B cell (primary cell): ENCODE measurements at regions of chr9 and their contacts with region 1.

Region 1: DNA sequence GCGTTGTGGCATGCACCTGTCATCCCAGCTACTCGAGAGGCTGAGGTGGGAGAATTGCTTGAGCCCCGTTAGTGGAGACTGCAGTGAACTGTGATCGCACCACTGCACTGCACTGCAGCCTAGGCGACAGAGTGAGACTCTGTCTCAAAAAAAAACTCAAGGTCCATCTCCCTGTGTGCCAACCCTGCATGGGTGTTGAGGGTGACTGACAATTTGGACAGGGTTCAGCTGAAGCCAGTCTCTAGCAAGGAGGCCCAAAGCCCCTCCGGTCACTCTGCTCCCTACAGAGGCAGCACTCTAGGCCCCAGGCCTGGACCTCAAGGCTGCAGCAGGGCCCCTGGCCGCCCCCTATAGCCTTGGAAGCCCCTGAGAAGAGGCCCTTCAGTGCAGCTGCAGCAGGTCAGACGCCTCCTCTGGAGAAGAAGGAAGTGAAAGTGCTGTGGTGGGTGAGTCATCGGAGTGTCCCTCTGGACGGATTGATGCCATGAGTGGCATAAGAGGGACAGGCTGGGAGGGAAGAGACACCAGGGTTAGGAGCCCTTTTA is 39.2 kb upstream of the NEK6 start:
- DNase-seq: peak; percentile 90
- ATAC-seq: peak; percentile 62
- H3K4me3 ChIP-seq: peak overlapping the region in 1 of 5 experiments; percentile 40
- H3K4me3 Mint-ChIP-seq: peak overlapping the region; percentile 78
- H3K27ac ChIP-seq: peak overlapping the region; percentile 94 to 95
- H3K27ac Mint-ChIP-seq: peak overlapping the region; percentile 98
- H3K4me1 ChIP-seq: peaks cover 67 to 82% of the 10 kb centered on the region in 2 donors
- H3K4me1 Mint-ChIP-seq: peaks cover 85% of the 10 kb centered on the region
- H3K27me3 ChIP-seq: no peaks in the 10 kb centered on the region
- H3K27me3 Mint-ChIP-seq: no peaks in the 10 kb centered on the region
- CTCF ChIP-seq: no peak

Region 2: GRCh38 chr9:123338710-123339665 is 879.5 kb before region 1 on chr9:
- CTCF ChIA-PET with region 1: interaction called, 6 read pairs
- POLR2A ChIA-PET with region 1: no interaction called
- intact Hi-C with region 1: loop called (anchors 5 kb)
- DNase-seq: peak; percentile 90
- ATAC-seq: peak; percentile 58
- H3K4me3 ChIP-seq: peak overlapping the region in 4 of 5 experiments; percentile 30 to 46 (median 45)
- H3K4me3 Mint-ChIP-seq: peak overlapping the region; percentile 94
- H3K27ac ChIP-seq: peak overlapping the region; percentile 98 to 99
- H3K27ac Mint-ChIP-seq: peak overlapping the region; percentile 100
- H3K4me1 ChIP-seq: peaks cover 99 to 100% of the 10 kb centered on the region in 2 donors
- H3K4me1 Mint-ChIP-seq: peaks cover 96% of the 10 kb centered on the region
- H3K27me3 ChIP-seq: no peaks in the 10 kb centered on the region
- H3K27me3 Mint-ChIP-seq: no peaks in the 10 kb centered on the region
- CTCF ChIP-seq: no peak

Region 3: DNA sequence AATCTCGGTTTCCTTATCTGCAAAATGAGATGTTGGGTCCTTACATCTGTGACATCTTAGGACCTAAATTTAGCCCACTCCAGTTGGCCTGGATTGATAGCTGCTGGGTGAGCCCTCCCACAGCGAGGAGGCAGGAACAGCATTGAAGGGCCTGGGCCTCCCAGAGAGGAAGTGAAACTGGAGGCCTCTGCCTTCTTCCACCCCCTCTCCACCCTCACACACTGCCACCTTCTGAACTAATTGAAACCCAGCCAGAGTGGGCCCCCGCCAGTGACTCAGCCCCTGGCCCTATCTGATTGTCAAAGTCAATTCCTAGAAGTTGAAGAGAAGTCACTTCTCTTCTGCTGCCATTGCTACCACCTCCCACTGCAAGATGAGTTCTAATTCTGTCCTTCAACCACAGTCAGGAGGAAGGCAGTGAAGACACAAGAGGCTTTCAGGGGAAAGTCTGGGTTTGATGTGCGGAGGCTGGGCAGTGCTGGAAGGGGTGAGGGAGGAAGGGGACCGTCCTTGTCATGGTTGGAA is 16.0 kb before region 1 on chr9:
- CTCF ChIA-PET with region 1: interaction called, 44 read pairs
- POLR2A ChIA-PET with region 1: interaction called, 32 read pairs
- intact Hi-C with region 1: loop called (anchors 1 kb)
- DNase-seq: peak; percentile 91
- ATAC-seq: peak; percentile 90
- H3K4me3 ChIP-seq: peak overlapping the region in 2 of 5 experiments; percentile 7 to 34
- H3K4me3 Mint-ChIP-seq: peak overlapping the region; percentile 80
- H3K27ac ChIP-seq: peak overlapping the region; percentile 66 to 69
- H3K27ac Mint-ChIP-seq: peak overlapping the region; percentile 98
- H3K4me1 ChIP-seq: peaks cover 86 to 97% of the 10 kb centered on the region in 2 donors
- H3K4me1 Mint-ChIP-seq: peaks cover 85% of the 10 kb centered on the region
- H3K27me3 ChIP-seq: no peaks in the 10 kb centered on the region
- H3K27me3 Mint-ChIP-seq: no peaks in the 10 kb centered on the region
- CTCF ChIP-seq: peak; percentile 10

Region 4: DNA sequence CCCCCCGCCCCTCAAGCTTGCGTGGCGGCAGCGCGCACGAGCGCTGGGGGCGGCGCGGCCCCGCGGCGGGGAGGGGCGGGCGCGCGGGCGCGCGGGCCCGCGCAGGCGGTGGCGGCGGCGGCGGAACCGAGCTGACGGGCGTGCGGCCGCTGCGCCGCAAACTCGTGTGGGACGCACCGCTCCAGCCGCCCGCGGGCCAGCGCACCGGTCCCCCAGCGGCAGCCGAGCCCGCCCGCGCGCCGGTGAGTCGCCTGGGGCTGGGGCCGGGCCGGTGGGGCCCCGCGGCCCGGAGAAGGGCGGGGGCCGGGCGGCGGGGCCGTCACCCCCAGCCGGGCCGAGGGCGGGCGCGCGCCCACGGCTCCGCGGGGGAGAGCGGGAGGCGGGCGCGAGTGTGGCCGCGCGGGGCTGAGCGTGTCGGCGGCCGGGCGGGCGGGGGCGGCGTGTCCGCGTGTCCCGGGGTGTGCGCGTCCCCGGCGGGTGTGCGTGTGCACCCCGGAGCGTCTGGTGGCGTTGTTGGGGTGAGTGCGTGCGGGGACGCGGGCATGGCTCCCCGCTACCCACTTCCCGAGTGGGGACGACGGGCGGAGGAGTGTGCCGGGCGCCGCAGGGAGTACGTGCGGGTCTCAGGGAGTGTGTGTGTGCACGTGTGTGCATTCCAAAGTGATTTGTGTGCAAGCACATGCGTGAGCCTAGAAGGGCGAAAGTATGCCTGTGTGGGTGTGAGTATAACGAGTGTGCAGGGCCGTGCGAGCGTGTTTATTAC is 39.5 kb after region 1 on chr9 and contains the start of gene NEK6:
- CTCF ChIA-PET with region 1: interaction called, 6 read pairs
- POLR2A ChIA-PET with region 1: interaction called, 23 read pairs
- intact Hi-C with region 1: loop called (anchors 1 kb)
- DNase-seq: peak; percentile 75
- ATAC-seq: peak; percentile 60
- H3K4me3 ChIP-seq: peak within 1 kb of the TSS; percentile 65 to 97 (median 81)
- H3K4me3 Mint-ChIP-seq: peak within 1 kb of the TSS; percentile 100
- H3K27ac ChIP-seq: peak within 1 kb of the TSS; percentile 49 to 71
- H3K27ac Mint-ChIP-seq: peak within 1 kb of the TSS; percentile 98
- H3K4me1 ChIP-seq: peaks cover 42 to 67% of the 10 kb centered on the region in 2 donors
- H3K4me1 Mint-ChIP-seq: peaks cover 71% of the 10 kb centered on the region
- H3K27me3 ChIP-seq: no peaks in the 10 kb centered on the region
- H3K27me3 Mint-ChIP-seq: no peaks in the 10 kb centered on the region
- CTCF ChIP-seq: no peak
- total RNA-seq, gene NEK6: 63.1 and 66.3 TPM in 2 replicates

Region 5: GRCh38 chr9:124285903-124286291 is 67.4 kb after region 1 on chr9:
- CTCF ChIA-PET with region 1: interaction called, 3 read pairs
- POLR2A ChIA-PET with region 1: interaction called, 11 read pairs
- intact Hi-C with region 1: loop called (anchors 1 kb)
- DNase-seq: peak; percentile 85
- ATAC-seq: peak; percentile 42
- H3K4me3 ChIP-seq: peak overlapping the region in 2 of 5 experiments; percentile 7 to 48
- H3K4me3 Mint-ChIP-seq: peak overlapping the region; percentile 84
- H3K27ac ChIP-seq: peak overlapping the region; percentile 73 to 86
- H3K27ac Mint-ChIP-seq: peak overlapping the region; percentile 96
- H3K4me1 ChIP-seq: peaks cover 63 to 88% of the 10 kb centered on the region in 2 donors
- H3K4me1 Mint-ChIP-seq: peaks cover 87% of the 10 kb centered on the region
- H3K27me3 ChIP-seq: no peaks in the 10 kb centered on the region
- H3K27me3 Mint-ChIP-seq: no peaks in the 10 kb centered on the region
- CTCF ChIP-seq: no peak

Region 6: DNA sequence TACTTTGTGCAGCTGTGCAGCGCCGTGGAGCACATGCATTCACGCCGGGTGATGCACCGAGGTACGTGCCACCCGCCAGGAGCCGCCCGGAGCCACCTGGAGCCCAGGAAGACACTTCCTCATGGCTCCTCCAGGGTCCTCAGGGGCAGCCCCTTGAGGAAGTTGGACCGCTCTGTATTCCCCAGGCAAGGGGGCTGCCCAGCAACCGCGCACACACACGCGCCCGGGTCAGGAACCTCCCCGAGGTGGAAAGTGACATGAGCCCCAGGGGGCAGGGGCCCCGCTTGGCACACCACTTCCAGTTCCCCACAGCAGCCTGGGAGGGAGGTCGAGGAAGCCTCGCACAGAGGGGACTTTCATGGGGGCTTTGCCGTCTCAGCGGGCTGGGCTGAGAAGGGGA is 107.9 kb after region 1 on chr9:
- CTCF ChIA-PET with region 1: no interaction called
- POLR2A ChIA-PET with region 1: interaction called, 12 read pairs
- intact Hi-C with region 1: no loop called
- DNase-seq: no peak
- ATAC-seq: no peak
- H3K4me3 ChIP-seq: no peak overlapping the region
- H3K4me3 Mint-ChIP-seq: no peak overlapping the region
- H3K27ac ChIP-seq: no peak overlapping the region
- H3K27ac Mint-ChIP-seq: peak overlapping the region; percentile 50
- H3K4me1 ChIP-seq: peaks cover 0 to 22% of the 10 kb centered on the region in 2 donors
- H3K4me1 Mint-ChIP-seq: peaks cover 27% of the 10 kb centered on the region
- H3K27me3 ChIP-seq: no peaks in the 10 kb centered on the region
- H3K27me3 Mint-ChIP-seq: no peaks in the 10 kb centered on the region
- CTCF ChIP-seq: no peak